Prostate gland (tissue), 2 donors: ENCODE measurements at regions of chr4 and their contacts with region 1.

Region 1: DNA sequence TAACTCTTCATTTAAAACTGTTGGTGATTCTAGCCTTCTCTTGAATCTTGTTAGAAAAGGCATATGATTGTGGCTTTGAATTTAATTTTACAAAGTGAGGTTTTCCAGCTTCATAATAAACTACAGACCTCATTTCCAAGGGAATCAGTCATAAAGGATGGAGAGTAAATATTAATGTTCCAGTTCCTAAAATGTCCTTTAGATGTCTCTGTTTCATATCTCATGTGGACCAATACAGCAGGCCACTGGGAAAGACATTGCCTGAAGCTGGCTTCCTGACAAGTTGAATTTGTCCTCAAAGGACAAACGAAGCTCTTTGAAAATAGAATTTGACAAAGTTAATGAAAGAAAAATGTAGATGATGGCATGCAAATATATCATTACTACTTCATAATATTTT is 125.4 kb downstream of the ZNF330 start:
- DNase-seq: no peak
- H3K4me3 ChIP-seq: no peak overlapping the region
- H3K27ac ChIP-seq: no peak overlapping the region
- H3K4me1 ChIP-seq: no peaks in the 10 kb centered on the region
- H3K27me3 ChIP-seq: no peaks in the 10 kb centered on the region
- CTCF ChIP-seq: peak in 3 of 4 experiments; percentile 21 to 60 (median 59)
- POLR2A ChIP-seq: no peak

Region 2: GRCh38 chr4:141391771-141392170 is 45.6 kb after region 1 on chr4:
- intact Hi-C with region 1: no loop called
- DNase-seq: no peak
- H3K4me3 ChIP-seq: no peak overlapping the region
- H3K27ac ChIP-seq: no peak overlapping the region
- H3K4me1 ChIP-seq: no peaks in the 10 kb centered on the region
- H3K27me3 ChIP-seq: no peaks in the 10 kb centered on the region
- CTCF ChIP-seq: no peak
- POLR2A ChIP-seq: no peak

Region 3: DNA sequence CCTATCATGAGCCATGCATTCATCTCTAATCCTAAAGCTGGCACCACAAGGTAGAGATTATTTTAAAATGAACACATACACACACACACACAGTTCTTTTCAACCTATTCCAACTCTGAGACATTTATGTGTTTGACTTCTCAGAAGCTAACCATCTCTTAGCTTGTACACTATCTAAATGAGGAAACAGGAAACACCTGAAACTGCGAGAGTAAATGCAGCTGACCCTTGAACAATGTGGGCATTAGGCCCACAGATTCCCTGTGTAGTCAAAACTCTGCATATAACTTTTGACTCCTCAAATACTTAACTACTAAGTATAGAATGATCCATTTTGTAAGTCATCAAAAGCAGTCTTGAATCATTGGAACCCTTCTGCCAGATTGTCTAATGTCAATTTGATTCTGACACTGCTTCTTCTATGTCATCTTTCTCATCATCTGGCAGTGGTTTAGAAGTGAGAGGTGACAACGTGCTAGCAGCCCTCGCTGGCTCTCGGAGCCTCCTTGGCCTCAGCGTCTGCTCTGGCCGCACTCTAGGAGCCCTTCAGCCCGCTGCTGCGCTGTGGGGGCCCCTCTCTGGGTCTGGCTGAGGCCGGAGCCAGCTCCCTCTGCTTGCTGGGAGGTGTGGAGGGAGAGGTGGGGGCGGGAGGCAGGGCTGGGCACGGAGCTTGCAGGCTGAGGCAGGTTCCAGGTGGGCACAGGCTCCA is 268.9 kb after region 1 on chr4:
- intact Hi-C with region 1: no loop called
- DNase-seq: no peak
- H3K4me3 ChIP-seq: no peak overlapping the region
- H3K27ac ChIP-seq: no peak overlapping the region
- H3K4me1 ChIP-seq: no peaks in the 10 kb centered on the region
- H3K27me3 ChIP-seq: no peaks in the 10 kb centered on the region
- CTCF ChIP-seq: no peak
- POLR2A ChIP-seq: no peak

Region 4: DNA sequence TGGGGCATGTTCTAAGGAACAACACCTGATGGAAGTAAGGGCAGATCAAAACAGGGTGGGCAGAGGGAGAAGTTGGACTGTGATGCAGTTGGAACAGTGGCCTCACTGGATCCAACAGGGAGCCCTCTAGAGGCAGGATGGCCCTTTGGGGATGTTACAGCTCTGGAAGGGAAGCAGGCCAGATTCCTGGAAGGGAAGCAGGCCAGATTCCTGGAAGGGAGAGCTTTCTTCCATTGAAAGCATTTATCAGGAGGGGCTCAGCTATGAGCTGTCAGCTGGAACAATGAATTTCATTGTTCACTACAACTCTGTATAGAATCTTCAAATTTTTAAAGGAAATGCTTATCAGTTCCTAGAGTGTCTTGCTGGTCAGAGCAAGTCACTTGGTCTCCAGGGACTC is 308.0 kb after region 1 on chr4:
- intact Hi-C with region 1: loop called (anchors 10 kb)
- DNase-seq: no peak
- H3K4me3 ChIP-seq: no peak overlapping the region
- H3K27ac ChIP-seq: no peak overlapping the region
- H3K4me1 ChIP-seq: no peaks in the 10 kb centered on the region
- H3K27me3 ChIP-seq: no peaks in the 10 kb centered on the region
- CTCF ChIP-seq: no peak
- POLR2A ChIP-seq: no peak

Region 5: DNA sequence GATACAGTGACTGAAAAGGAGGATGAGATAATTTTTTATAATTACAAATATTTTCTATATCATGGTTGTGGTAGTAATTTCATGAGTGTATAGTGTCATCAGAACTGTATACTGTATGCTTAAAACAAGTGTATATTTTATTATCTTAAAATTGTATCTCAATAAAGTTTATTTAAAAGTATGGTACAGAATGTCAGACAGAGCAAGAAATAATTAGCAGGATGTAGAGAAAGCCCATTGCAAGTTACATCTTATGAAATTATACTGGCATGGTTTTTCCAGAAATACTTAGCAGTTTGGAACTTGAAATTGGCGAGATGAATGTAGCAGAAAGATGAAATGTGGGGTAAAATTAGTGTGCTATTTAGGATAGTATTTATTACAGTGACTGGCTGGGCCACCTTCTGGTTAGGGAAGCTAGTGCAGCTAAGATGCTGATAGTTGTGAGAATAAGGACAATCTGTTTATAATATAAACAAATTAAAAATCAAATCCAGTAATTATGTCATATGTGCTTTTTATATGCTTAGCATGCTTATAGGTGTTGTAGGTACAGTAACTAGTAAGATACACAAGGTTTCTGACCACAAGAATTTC is 365.0 kb after region 1 on chr4:
- intact Hi-C with region 1: loop called (anchors 10 kb)
- DNase-seq: no peak
- H3K4me3 ChIP-seq: no peak overlapping the region
- H3K27ac ChIP-seq: no peak overlapping the region
- H3K4me1 ChIP-seq: no peaks in the 10 kb centered on the region
- H3K27me3 ChIP-seq: no peaks in the 10 kb centered on the region
- CTCF ChIP-seq: peak in 2 of 4 experiments; percentile 34 to 51
- POLR2A ChIP-seq: no peak

Region 6: GRCh38 chr4:141853091-141853764 is 507.1 kb after region 1 on chr4:
- intact Hi-C with region 1: no loop called
- DNase-seq: no peak
- H3K4me3 ChIP-seq: no peak overlapping the region
- H3K27ac ChIP-seq: no peak overlapping the region
- H3K4me1 ChIP-seq: no peaks in the 10 kb centered on the region
- H3K27me3 ChIP-seq: no peaks in the 10 kb centered on the region
- CTCF ChIP-seq: no peak
- POLR2A ChIP-seq: no peak

Region 7: DNA sequence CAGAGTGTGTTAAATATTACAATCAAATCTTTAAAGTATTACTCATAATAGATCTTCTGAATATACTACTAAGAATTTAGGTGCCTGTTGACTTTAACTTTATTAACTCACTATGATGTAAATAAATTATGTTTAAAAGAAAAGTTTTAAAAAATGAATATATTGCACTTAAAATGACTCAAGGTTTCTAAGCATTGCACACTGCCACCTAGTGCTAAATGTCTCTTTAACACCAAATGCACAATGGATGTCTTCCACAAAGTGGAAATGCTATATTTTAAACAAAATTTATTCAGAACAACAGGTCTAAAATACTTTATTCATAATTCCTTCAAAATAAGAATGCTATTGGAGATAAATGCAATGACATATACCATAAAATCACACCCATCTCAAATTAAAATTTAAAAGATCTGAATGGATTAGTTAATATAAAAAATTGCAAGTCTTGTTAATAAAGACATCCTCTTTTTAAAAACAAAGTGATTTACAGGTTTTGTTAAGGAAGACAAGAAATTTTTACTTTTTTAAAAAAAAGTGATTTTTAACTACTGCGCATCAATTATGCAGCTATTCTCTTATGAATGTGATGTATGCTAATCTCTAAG is 1494.5 kb after region 1 on chr4:
- intact Hi-C with region 1: loop called (anchors 5 kb)
- DNase-seq: no peak
- H3K4me3 ChIP-seq: no peak overlapping the region
- H3K27ac ChIP-seq: no peak overlapping the region
- H3K4me1 ChIP-seq: no peaks in the 10 kb centered on the region
- H3K27me3 ChIP-seq: no peaks in the 10 kb centered on the region
- CTCF ChIP-seq: peak in 3 of 4 experiments; percentile 50 to 62 (median 50)
- POLR2A ChIP-seq: no peak